Activated CD4-positive, alpha-beta memory T cell treated with anti-CD3 and anti-CD28 coated beads for 36 hours (primary cell): ENCODE measurements at regions of chr10 and their contacts with region 1.

Region 1: DNA sequence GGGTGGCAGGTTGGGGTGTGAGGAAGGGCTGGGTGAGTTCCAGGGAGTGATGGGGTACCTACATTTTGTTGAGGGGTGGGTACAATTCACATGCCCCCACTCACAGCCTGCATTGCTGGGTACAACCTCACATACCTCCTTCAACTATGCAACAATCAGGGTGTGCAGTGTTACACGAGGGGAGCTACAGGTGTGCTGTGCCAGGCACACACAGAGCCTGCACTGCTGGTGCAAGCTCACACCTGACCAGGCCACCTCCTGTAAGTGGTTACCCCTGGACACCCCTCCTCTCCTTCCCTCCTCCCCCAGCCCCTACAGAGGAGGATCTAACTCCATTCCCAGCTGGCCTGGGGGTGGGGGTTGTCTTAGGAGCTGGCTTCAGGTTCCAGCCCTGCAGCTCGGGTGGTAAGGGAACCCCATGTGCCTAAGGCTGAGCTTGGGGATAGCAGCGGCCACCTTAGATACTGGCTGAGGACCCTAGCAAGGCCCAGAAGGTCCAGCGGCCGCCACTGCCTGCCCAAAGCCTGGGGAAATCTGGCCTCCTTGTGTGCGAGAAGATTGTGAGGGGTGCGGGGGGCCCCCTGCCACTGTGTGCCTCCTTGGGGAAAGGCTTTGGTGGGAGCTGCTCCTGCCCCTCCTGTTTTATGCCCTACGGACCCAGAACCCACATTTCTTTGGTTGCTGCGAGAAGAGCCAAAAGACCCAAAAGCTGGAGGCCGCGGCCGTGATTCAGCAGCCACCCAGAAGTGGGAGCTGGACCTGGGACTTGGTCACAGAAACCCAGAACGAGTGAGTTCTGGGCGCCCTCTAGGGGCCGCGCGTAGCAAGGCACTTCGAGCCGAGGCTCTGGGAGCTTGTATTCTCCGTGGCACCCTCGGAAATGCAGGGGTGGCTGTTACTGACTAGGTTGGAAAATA is 10.8 kb downstream of the TLX1 start:
- DNase-seq: peak; percentile 88
- H3K4me3 Mint-ChIP-seq: no peak overlapping the region
- H3K27ac Mint-ChIP-seq: no peak overlapping the region
- H3K4me1 Mint-ChIP-seq: peaks cover 22% of the 10 kb centered on the region
- H3K27me3 Mint-ChIP-seq: peaks cover 85% of the 10 kb centered on the region

Region 2: DNA sequence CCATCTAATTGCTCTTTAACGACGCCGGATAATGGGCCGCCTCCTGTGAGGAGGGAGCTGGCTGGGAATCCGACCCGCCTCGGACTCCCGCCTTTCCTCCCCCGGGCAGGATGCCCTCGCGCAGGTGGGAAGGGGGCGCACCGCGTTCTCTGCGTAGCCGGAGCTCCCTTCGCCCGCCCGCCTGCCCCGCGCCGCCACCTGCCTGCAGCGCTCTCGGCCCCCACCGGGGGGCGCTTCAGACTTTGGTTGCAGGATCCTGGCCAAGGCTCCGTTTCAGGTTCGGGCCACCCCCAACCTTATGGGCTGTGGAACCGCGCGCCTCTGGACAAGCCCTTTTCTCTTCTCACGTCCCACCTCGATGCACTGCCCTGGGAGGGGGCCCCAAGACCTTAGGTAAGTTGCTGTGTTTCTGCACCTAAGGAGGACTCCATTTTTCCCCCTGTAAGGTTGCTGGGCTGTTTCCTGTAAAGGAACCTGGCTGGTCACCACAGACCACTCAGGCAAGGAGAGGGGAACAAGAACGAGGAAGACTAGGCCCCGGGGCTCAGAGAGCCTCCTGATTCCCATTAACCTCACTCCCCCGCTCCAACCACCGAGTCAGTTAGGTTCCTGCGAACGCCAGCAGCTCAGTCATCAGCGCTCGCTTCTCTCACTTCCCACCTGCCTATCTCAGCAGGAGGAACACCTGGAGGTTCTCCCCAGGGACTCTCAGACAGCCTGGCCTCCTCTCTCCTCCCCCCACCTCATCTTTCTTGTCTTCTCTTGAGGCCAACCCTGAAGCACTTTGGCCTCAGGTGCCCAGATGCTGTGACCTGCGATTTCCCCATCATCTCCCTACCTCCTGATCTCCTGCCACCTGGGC is 91.4 kb before region 1 on chr10:
- CTCF ChIA-PET with region 1: interaction called, 45 read pairs
- POLR2A ChIA-PET with region 1: no interaction called
- intact Hi-C with region 1: no loop called
- DNase-seq: peak; percentile 84
- H3K4me3 Mint-ChIP-seq: no peak overlapping the region
- H3K27ac Mint-ChIP-seq: no peak overlapping the region
- H3K4me1 Mint-ChIP-seq: peaks cover 15% of the 10 kb centered on the region
- H3K27me3 Mint-ChIP-seq: peaks cover 47% of the 10 kb centered on the region

Region 3: GRCh38 chr10:101075775-101076174 is 66.1 kb before region 1 on chr10:
- CTCF ChIA-PET with region 1: interaction called, 121 read pairs
- POLR2A ChIA-PET with region 1: no interaction called
- intact Hi-C with region 1: no loop called
- DNase-seq: no peak
- H3K4me3 Mint-ChIP-seq: no peak overlapping the region
- H3K27ac Mint-ChIP-seq: no peak overlapping the region
- H3K4me1 Mint-ChIP-seq: peaks cover 6% of the 10 kb centered on the region
- H3K27me3 Mint-ChIP-seq: peaks cover 47% of the 10 kb centered on the region

Region 4: DNA sequence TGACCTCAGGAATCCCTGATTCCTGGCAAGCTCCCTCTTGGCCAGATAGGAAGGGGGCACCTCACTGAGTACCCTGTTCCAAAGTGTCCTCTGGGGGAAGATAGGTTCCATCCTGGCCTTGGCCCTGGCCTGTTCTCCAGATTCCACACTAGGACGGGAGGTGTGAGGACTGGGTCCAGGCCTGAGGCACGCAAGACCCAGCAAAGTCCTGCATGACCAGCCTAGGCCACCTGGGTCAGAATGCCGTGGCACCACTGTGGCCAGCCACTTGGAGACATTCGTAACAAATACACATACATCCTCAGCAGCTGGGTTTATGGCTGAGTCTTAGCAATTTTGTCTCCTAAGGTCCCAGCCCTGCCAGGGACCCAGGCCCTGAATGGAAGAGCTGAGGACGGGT is 34.1 kb before region 1 on chr10:
- CTCF ChIA-PET with region 1: interaction called, 668 read pairs
- POLR2A ChIA-PET with region 1: no interaction called
- intact Hi-C with region 1: no loop called
- DNase-seq: no peak
- H3K4me3 Mint-ChIP-seq: no peak overlapping the region
- H3K27ac Mint-ChIP-seq: no peak overlapping the region
- H3K4me1 Mint-ChIP-seq: no peaks in the 10 kb centered on the region
- H3K27me3 Mint-ChIP-seq: peaks cover 16% of the 10 kb centered on the region

Region 5: DNA sequence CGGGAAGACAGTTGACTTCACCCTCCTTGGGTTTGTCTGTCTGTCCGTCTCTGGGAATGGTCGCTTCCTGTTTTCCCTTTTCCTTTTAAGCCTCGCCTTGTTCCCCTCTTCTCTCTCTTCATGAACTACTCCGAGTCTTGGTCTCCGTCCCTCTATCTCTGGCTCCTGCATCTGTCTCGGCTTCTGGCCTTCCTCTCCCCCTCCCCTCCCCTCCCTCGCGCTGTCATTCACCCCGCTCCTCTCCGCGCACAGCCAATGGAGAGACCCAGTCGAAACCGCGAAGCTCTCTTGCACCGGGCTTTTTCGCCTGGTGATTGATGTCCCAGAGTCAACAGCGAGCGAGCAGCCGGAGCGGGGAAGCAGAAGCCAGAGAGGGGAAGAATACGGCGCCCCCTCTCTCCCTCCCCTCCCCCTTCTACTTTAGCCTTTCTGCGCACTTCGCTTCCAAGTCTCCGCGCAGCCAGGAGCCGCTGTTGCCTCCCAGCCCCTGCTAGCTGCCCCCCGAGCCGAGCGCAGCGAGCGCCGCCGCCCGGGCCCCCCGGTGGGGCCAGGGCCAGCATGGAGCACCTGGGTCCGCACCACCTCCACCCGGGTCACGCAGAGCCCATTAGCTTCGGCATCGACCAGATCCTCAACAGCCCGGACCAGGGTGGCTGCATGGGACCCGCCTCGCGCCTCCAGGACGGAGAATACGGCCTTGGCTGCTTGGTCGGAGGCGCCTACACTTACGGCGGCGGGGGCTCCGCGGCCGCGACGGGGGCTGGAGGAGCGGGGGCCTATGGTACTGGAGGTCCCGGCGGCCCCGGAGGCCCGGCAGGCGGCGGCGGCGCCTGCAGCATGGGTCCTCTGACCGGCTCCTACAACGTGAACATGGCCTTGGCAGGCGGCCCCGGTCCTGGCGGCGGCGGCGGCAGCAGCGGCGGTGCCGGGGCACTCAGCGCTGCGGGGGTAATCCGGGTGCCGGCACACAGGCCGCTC is 10.6 kb before region 1 on chr10 and contains the start of gene TLX1:
- CTCF ChIA-PET with region 1: interaction called, 65 read pairs
- POLR2A ChIA-PET with region 1: no interaction called
- intact Hi-C with region 1: no loop called
- DNase-seq: no peak
- H3K4me3 Mint-ChIP-seq: no peak within 1 kb of the TSS
- H3K27ac Mint-ChIP-seq: no peak within 1 kb of the TSS
- H3K4me1 Mint-ChIP-seq: peaks cover 29% of the 10 kb centered on the region
- H3K27me3 Mint-ChIP-seq: peaks cover 76% of the 10 kb centered on the region
- total RNA-seq, gene TLX1: not detected

Region 6: GRCh38 chr10:101161494-101162299 is 19.8 kb after region 1 on chr10:
- CTCF ChIA-PET with region 1: interaction called, 26 read pairs
- POLR2A ChIA-PET with region 1: no interaction called
- intact Hi-C with region 1: no loop called
- DNase-seq: peak; percentile 82
- H3K4me3 Mint-ChIP-seq: no peak overlapping the region
- H3K27ac Mint-ChIP-seq: no peak overlapping the region
- H3K4me1 Mint-ChIP-seq: peaks cover 8% of the 10 kb centered on the region
- H3K27me3 Mint-ChIP-seq: peaks cover 53% of the 10 kb centered on the region

Region 7: GRCh38 chr10:101228153-101228973 is 86.5 kb after region 1 on chr10:
- CTCF ChIA-PET with region 1: interaction called, 10 read pairs
- POLR2A ChIA-PET with region 1: no interaction called
- intact Hi-C with region 1: loop called (anchors 5 kb)
- DNase-seq: no peak
- H3K4me3 Mint-ChIP-seq: peak overlapping the region; percentile 3
- H3K27ac Mint-ChIP-seq: no peak overlapping the region
- H3K4me1 Mint-ChIP-seq: peaks cover 35% of the 10 kb centered on the region
- H3K27me3 Mint-ChIP-seq: peaks cover 68% of the 10 kb centered on the region